Activated CD4-positive, alpha-beta T cell treated with anti-CD3 and anti-CD28 coated beads for 36 hours (primary cell): ENCODE measurements at regions of chr12 and their contacts with region 1.

Region 1: GRCh38 chr12:51871126-51871525 is 16.8 kb upstream of the ANKRD33 start:
- DNase-seq: no peak
- ATAC-seq: no peak
- H3K4me3 Mint-ChIP-seq: no peak overlapping the region
- H3K27ac Mint-ChIP-seq: no peak overlapping the region
- H3K4me1 Mint-ChIP-seq: peaks cover 11% of the 10 kb centered on the region
- H3K27me3 Mint-ChIP-seq: peaks cover 31% of the 10 kb centered on the region

Region 2: DNA sequence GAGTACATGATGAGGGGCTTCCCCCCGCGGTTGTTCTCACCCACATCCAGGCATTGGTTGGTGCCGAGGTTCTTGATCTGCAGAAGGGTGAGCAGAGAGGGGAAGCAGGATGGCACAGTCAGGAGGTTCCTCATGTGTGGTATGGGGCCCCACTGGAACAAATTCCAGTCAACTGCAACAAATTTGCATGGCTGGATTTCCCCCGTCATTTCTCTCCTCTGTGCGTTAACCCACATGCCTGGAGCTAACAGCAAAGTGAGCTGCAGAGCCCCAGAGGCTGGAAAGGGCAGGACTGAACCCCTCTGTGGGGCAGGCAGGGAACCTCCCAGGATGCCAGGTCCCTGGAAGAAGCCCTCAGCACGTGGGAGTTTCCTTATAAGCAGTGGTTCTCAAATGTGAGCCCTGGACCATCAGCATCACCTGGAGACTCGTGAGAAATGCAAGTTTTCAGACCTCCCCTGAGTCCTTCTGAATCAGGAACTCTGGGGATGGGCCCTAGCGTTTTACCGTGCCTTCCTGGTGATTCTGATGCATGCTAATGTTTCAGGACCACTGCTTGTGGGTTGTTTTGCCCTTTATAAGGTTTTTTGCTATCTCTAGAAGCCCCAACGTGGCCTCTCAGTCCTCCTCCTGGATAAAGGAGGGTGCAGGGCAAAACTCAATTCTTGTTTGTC is 513.6 kb before region 1 on chr12:
- CTCF ChIA-PET with region 1: no interaction called
- POLR2A ChIA-PET with region 1: no interaction called
- intact Hi-C with region 1: no loop called
- DNase-seq: peak; percentile 61
- ATAC-seq: peak; percentile 76
- H3K4me3 Mint-ChIP-seq: no peak overlapping the region
- H3K27ac Mint-ChIP-seq: peak overlapping the region; percentile 7
- H3K4me1 Mint-ChIP-seq: peaks cover 14% of the 10 kb centered on the region
- H3K27me3 Mint-ChIP-seq: no peaks in the 10 kb centered on the region

Region 3: DNA sequence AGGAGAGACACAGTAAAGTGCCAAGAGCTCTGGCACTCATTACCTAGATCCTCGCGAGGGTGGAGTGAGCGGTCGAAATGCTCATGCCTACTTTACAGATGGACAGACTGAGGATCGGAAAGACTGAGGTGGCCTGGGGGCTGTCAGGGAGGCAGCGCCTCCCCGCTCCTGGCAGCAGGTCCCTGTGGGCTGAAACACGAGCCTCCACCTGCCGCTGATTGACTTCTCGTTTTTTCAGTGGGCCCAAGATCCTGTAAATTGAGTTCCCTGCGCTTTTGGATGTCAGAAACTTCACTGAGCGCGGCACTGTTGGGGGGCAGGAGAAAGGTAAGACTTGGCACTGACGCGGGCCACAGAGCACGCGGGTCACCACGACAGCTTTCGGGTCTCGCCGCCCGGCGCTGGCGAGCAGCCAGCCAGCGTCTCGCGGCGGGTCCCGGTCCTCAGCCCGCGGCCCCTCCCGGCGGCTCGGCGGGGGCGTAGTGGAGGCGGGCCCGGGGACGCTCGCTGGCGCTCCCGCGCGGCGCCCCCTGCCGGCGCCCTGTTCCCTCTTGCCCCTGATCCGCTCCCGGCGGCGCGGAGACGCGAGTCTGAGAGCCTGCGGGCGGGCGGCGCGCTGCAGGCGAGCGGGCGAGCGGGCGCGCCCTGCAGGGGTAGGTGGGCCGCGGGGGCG is 280.6 kb before region 1 on chr12:
- CTCF ChIA-PET with region 1: interaction called, 4 read pairs
- POLR2A ChIA-PET with region 1: no interaction called
- intact Hi-C with region 1: loop called in 1 of 2 experiments (anchors 10 kb)
- DNase-seq: peak; percentile 88
- ATAC-seq: peak; percentile 89
- H3K4me3 Mint-ChIP-seq: peak overlapping the region; percentile 76
- H3K27ac Mint-ChIP-seq: peak overlapping the region; percentile 63
- H3K4me1 Mint-ChIP-seq: peaks cover 16% of the 10 kb centered on the region
- H3K27me3 Mint-ChIP-seq: peaks cover 47% of the 10 kb centered on the region

Region 4: GRCh38 chr12:51886021-51886322 is 14.8 kb after region 1 on chr12:
- CTCF ChIA-PET with region 1: interaction called, 22 read pairs
- POLR2A ChIA-PET with region 1: no interaction called
- intact Hi-C with region 1: no loop called
- DNase-seq: peak; percentile 70
- ATAC-seq: peak; percentile 99
- H3K4me3 Mint-ChIP-seq: peak overlapping the region; percentile 12
- H3K27ac Mint-ChIP-seq: peak overlapping the region; percentile 87
- H3K4me1 Mint-ChIP-seq: peaks cover 19% of the 10 kb centered on the region
- H3K27me3 Mint-ChIP-seq: no peaks in the 10 kb centered on the region

Region 5: DNA sequence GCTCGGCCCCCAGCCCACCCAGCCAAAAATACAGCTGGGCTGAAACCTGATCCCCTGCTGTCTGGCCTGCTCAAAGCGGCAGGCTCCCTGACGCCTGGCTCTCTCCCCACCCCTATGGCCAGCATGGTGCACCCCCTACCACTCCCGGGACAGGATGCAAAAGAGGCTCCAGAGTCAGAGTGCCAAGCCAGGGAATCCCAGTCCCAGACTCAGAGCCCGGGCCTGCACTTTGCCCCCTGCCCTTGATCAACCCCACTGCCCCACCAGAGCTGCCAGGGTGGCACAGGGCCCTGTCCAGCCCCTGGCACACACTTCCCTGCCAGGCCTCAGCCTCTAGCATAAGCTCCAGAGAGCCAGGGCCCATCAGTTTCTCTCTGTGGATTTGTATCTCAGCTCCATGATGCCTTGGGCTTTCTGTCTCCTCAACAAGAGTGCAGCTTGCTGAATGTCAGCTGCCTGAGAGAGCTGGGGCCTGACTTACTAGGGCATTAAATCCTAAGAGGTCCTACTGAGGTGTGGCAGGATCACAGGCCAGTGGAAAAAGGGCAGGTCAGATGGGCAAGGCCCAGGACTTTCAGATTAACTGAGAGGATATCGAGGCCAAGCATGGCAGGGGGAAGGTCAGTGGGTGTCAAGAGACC is 50.0 kb after region 1 on chr12:
- CTCF ChIA-PET with region 1: no interaction called
- POLR2A ChIA-PET with region 1: no interaction called
- intact Hi-C with region 1: no loop called
- DNase-seq: no peak
- ATAC-seq: no peak
- H3K4me3 Mint-ChIP-seq: no peak overlapping the region
- H3K27ac Mint-ChIP-seq: no peak overlapping the region
- H3K4me1 Mint-ChIP-seq: peaks cover 11% of the 10 kb centered on the region
- H3K27me3 Mint-ChIP-seq: no peaks in the 10 kb centered on the region